Prostate gland (tissue), 2 donors: ENCODE measurements at regions of chr1 and their contacts with region 1.

Region 1: DNA sequence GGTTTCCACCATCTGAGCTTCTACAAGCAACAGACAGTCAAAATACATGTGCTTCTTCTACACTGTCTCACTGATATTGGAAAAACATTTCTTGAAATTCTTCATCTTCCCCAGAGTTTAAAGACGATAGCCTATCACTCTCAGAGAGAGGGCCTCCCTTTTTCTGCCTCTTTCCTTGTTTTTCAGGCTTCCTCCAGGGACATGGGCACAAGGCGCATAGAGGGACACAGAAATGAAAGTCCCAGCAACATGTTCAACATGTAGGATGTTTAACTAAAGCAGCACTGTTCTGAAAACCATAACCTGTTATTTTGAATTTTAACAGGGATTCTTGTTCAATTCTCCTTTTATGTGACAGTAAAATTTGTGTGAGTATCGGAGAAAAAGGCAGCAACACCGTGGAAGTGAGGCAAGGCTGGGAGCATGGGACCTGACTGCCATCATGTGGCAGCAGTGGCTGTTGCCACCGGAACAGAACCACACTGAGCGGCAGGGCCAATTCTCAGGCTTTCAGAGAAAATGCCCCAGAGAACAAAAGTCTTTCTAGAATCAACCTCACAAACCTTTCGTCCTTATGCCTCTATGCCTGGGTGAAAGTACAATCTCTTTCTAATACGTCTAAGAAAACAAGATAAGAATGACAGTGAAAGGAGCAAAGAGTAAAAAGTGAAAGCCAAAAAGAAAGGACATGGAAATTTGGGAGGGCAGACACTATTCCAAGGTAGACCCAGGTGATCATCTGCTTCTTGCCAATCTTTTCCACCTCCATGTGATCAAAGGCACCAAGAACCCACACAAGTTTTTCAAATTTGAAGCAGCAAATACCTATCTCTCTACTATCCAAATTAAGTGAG is 54.5 kb downstream of the PCNX2 start:
- DNase-seq: peak; percentile 34
- H3K4me3 ChIP-seq: no peak overlapping the region
- H3K27ac ChIP-seq: no peak overlapping the region
- H3K4me1 ChIP-seq: peaks cover 3% of the 10 kb centered on the region
- H3K27me3 ChIP-seq: no peaks in the 10 kb centered on the region
- CTCF ChIP-seq: peak in 3 of 4 experiments; percentile 46 to 85 (median 66)
- POLR2A ChIP-seq: no peak

Region 2: GRCh38 chr1:231757101-231757404 is 1484.0 kb before region 1 on chr1:
- intact Hi-C with region 1: loop called (anchors 5 kb)
- DNase-seq: no peak
- H3K4me3 ChIP-seq: no peak overlapping the region
- H3K27ac ChIP-seq: no peak overlapping the region
- H3K4me1 ChIP-seq: peaks cover 5% of the 10 kb centered on the region
- H3K27me3 ChIP-seq: no peaks in the 10 kb centered on the region
- CTCF ChIP-seq: no peak
- POLR2A ChIP-seq: no peak

Region 3: DNA sequence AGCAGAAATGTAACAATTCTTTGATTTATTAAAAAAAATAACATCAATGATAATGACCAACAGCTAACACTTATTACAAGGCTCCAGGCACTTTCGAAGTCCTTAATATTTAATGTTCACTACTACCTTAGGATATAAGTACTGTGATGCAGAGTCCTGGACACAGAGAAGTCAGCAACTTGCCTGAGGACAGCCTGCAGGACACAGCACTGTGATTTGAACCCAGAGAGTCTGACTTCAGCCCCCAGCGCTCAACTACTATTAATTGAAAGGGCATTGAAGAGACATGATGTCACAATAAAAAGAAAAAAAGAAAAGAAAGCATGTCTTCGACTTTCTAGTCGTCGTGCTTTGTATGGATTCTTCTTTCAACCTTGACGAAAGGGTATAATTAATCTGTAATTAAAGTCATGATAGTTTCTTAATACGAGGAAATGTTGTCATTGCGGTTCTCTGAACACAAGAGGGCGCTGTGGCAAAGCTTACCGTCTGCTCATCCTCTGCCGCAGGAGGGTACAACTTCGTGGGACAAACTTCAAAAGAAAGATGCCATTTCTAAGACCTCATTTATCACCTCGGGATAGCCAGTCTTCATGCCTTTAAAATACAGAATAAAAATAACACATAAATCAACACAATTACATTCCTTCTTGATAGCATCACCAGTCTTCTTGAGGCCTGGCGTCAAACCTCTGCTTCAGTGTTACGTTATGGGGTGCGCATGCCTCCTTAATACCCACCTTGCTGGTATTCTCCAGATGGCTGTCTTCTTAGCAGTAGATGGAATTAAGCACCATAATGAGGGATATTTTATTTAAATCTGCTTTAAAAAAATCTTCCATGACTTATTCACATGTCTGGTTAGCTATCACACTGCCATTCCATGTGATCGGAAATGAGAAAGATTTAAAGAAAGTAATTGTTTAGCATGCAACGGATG is 1374.4 kb before region 1 on chr1:
- intact Hi-C with region 1: loop called (anchors 10 kb)
- DNase-seq: peak; percentile 48
- H3K4me3 ChIP-seq: no peak overlapping the region
- H3K27ac ChIP-seq: no peak overlapping the region
- H3K4me1 ChIP-seq: no peaks in the 10 kb centered on the region
- H3K27me3 ChIP-seq: no peaks in the 10 kb centered on the region
- CTCF ChIP-seq: peak; percentile 68 to 88 (median 81)
- POLR2A ChIP-seq: no peak

Region 4: DNA sequence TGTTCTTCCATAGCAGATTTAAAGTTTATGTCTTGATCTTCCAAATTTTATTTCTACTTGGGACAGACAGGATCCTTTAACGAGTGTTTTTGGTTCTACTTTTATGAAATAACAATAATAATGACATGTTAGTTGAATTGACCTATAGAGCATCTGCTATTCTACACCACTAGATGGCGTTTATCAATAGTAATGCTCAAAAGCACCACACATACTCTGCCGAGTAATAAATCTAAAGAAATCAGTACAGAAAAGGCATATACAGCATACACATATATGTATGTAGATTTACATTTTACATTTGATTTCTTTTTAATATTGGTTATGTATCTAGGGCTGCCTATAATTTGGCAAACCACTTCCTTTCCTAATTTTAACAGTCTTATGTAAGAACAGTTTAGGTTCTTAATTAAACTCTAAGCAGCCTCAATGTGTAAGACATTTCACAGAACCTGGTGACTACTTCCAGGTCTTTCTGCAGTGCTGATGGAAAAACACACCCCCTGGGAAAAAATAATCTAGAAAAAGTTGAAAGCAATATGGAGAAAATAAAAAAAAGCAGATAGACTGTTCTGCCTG is 605.2 kb before region 1 on chr1:
- intact Hi-C with region 1: loop called (anchors 5 kb)
- DNase-seq: no peak
- H3K4me3 ChIP-seq: no peak overlapping the region
- H3K27ac ChIP-seq: no peak overlapping the region
- H3K4me1 ChIP-seq: no peaks in the 10 kb centered on the region
- H3K27me3 ChIP-seq: no peaks in the 10 kb centered on the region
- CTCF ChIP-seq: peak; percentile 41 to 91 (median 84)
- POLR2A ChIP-seq: no peak